ENCODE measurements at regions of chr1 and their contacts with region 1.

Region 1: DNA sequence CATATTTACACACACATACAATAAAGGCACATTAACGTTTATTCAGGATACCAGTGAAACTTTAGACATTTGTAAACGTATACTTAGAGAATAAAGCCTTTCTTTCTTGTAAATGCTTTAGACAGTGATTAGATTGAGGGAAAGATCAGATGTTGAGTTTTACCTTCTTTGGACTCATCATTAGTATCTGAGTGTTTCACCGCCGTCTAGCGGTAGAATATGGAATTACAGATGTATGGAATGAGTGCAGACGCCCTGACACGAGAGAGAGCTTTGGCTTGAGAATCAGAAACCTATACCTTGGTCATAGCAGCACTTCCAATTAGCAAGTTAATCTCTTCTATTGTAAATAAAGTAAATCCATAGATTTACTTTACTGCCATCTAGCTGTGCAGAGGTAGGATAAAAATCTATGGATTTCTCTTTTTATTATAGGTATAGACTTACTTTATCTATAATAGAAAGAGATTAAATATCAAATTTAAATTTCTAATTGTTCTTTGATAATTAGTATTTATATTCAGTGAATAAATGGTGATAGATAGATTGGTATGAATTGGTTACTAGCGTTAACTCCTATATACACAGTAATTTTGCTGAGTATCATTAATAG is 12.6 kb downstream of the FLG2 start:
- DNase-seq: peak; percentile 75
- H3K4me3 Mint-ChIP-seq: no peak overlapping the region
- H3K27ac Mint-ChIP-seq: no peak overlapping the region
- H3K4me1 Mint-ChIP-seq: no peaks in the 10 kb centered on the region
- H3K27me3 Mint-ChIP-seq: peaks cover 39% of the 10 kb centered on the region
- CTCF ChIP-seq: peak; percentile 83

Region 2: GRCh38 chr1:152047730-152048402 is 299.4 kb before region 1 on chr1:
- CTCF ChIA-PET with region 1: interaction called, 4 read pairs
- intact Hi-C with region 1: loop called (anchors 10 kb)
- DNase-seq: peak; percentile 96
- H3K4me3 Mint-ChIP-seq: peak overlapping the region; percentile 48
- H3K27ac Mint-ChIP-seq: peak overlapping the region; percentile 84
- H3K4me1 Mint-ChIP-seq: peaks cover 41% of the 10 kb centered on the region
- H3K27me3 Mint-ChIP-seq: peaks cover 4% of the 10 kb centered on the region
- CTCF ChIP-seq: no peak

Region 3: DNA sequence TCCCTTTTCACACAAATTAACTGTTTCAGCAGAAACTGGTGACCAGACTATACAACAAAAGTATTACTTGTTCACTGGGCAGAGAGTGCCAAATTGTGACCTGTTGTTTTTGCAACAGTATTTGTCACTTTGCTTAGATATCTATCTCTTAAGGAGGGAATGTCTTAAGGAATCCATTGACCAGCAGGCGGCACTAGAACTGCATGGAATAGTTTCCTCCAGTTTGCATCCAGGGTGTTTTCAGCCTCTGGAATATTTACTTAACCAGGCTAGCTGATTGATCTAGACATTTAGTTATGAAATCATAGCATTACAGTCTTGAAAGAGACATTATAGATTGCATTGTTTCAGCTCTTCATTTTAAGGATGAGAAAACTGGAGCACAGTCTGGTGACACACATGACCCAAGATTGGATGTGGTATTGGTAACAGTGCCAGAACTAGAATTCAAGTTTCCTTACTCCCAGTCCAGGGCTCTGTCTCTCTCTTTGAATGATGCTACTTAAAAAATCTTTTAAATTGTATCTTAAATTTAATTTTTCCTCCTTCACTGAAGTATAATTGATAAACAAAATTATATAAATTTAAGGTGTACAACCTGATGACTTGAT is 205.1 kb before region 1 on chr1:
- CTCF ChIA-PET with region 1: no interaction called
- intact Hi-C with region 1: loop called (anchors 1 kb)
- DNase-seq: peak; percentile 69
- H3K4me3 Mint-ChIP-seq: no peak overlapping the region
- H3K27ac Mint-ChIP-seq: no peak overlapping the region
- H3K4me1 Mint-ChIP-seq: no peaks in the 10 kb centered on the region
- H3K27me3 Mint-ChIP-seq: peaks cover 78% of the 10 kb centered on the region
- CTCF ChIP-seq: peak; percentile 80

Region 4: DNA sequence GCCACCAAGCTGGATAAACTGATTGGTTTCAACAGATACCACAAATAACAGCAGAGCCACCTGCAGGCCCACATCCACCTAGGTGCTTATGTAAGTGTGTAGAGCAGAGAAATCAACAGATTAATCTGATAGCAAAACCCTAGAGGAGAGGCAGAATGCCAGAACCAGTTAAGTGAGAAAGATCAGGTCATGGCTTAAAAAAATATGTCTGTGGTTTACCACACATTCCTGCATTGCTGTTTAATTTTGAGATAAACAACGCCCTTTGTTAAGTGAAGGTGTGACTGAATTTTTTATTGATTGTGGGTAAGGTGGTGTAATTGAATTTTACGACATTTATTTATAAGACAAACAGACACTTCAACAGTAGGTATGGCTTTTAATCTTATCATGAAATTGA is 45.7 kb after region 1 on chr1:
- CTCF ChIA-PET with region 1: interaction called, 5 read pairs
- intact Hi-C with region 1: loop called (anchors 5 kb)
- DNase-seq: peak; percentile 72
- H3K4me3 Mint-ChIP-seq: no peak overlapping the region
- H3K27ac Mint-ChIP-seq: peak overlapping the region; percentile 3
- H3K4me1 Mint-ChIP-seq: peaks cover 18% of the 10 kb centered on the region
- H3K27me3 Mint-ChIP-seq: peaks cover 95% of the 10 kb centered on the region
- CTCF ChIP-seq: no peak

Region 5: GRCh38 chr1:152440635-152441471 is 93.6 kb after region 1 on chr1:
- CTCF ChIA-PET with region 1: interaction called, 10 read pairs
- intact Hi-C with region 1: loop called (anchors 2 kb)
- DNase-seq: peak; percentile 84
- H3K4me3 Mint-ChIP-seq: no peak overlapping the region
- H3K27ac Mint-ChIP-seq: no peak overlapping the region
- H3K4me1 Mint-ChIP-seq: no peaks in the 10 kb centered on the region
- H3K27me3 Mint-ChIP-seq: peaks cover 91% of the 10 kb centered on the region
- CTCF ChIP-seq: peak; percentile 92